Kidney (tissue), 22 donors: ENCODE measurements at regions of chr2 and their contacts with region 1.

Region 1: GRCh38 chr2:62456721-62457539 is 49.1 kb downstream of the TMEM17 start:
- DNase-seq: peak; percentile 74 to 92 (median 85)
- H3K4me3 ChIP-seq: peak overlapping the region; percentile 36 to 73 (median 59)
- H3K27ac ChIP-seq: peak overlapping the region; percentile 75 to 78
- H3K4me1 ChIP-seq: peaks cover 0 to 7% (median 3%) of the 10 kb centered on the region in 3 donors
- H3K27me3 ChIP-seq: no peaks in the 10 kb centered on the region
- CTCF ChIP-seq: peak; percentile 90

Region 2: DNA sequence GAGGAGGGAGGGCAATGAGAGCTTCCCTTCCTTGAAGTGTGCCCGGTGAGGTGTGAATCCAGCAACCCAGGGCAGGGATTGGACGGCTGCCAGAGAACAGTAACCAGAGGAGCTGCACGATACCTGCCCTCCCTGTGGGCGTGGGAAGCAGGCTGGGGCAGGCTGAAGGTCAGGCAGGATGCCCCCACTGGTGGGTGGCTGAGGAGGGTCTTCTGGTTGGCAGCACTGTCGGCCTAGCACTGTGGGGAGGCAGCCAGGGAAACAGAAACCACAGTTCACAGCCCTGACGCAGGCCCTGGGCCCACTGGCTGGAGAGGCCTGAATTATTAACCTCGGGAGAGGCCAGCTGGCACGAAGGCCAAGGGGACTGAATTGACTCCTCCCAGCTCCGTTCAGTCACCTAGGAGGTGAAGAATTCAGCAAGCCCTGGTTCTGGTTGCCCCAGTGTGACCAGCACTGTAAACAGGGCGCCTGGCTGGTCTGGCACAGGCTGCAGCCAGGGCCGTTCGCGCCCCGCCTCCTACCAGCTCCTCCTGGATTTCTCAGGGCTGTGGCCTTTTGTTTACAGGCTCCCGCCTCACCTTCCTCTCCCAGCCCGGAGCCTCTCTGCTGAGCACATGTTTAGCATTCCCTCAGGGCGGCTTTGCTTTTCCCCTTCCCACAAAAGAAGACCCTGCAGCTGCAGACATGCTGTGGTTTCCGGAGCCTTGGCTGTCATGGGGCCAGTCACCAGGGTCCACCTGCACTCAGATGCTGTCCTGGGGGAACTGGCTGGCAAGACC is 163.2 kb before region 1 on chr2:
- intact Hi-C with region 1: no loop called
- DNase-seq: peak; percentile 85 to 96 (median 94)
- H3K4me3 ChIP-seq: peak overlapping the region in 2 of 3 donors; percentile 9 to 37
- H3K27ac ChIP-seq: peak overlapping the region; percentile 88 to 92
- H3K4me1 ChIP-seq: peaks cover 0 to 30% (median 18%) of the 10 kb centered on the region in 3 donors
- H3K27me3 ChIP-seq: no peaks in the 10 kb centered on the region
- CTCF ChIP-seq: no peak

Region 3: DNA sequence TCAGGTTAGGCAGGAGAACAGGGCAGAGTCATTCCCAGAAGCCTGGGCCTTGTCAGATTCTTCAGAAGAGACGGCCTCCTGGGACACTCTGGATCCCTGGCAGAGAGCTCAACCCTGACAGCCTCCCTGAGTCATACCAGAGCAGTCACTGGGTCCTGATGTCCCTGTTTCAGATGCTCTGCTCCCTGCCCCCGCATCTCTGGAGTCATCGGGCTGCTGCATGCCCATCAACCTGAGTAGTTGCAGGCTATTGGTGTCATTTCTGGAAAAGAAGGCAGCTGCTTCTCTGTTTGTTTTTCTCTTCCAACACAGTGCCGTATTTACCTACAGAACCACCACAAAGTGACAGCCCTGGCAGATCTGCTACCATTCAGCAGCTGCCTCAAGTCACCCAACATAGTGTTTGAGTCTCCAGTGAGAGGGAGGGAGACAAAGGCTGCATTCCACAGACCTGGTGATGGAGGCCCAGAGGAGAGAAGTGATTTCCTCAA is 115.9 kb before region 1 on chr2:
- intact Hi-C with region 1: no loop called
- DNase-seq: peak; percentile 32 to 77 (median 54)
- H3K4me3 ChIP-seq: no peak overlapping the region
- H3K27ac ChIP-seq: no peak overlapping the region
- H3K4me1 ChIP-seq: no peaks in the 10 kb centered on the region
- H3K27me3 ChIP-seq: no peaks in the 10 kb centered on the region
- CTCF ChIP-seq: no peak

Region 4: DNA sequence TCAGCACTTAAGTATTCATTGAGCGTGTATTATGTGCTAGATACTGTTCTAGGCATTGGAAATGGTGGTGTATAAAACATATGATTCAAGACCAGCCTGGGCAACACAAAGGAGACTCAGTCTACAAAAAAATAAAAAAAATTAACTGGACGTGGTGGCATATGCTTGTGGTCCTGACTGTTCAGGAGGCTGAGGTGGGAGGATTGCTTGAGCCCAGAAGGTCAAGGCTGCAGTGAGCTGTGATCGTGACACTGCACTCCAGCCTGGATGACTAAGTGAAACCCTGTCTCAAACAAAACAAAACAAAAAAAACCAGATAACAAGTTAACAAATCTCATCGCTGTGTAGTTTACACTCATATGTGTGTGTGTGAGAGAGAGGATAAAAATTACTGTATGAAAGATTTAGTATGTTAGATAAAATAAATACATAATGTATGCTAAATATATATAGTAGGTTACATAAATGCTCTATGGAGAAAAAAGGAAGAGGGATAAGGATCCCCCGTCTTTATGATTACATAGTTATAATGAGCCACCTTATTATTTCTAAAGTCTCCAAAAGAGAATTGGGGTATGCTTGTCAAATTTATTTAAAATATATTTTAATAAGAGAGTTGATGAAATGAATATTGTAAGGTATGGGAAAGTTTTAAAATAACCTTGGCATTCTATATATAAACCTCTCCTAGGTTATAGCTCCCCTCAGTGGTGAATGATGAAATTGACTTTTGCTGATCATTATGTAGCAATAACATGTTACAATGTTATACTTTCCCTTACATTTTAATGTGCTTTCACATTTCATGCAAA is 317.8 kb after region 1 on chr2:
- intact Hi-C with region 1: loop called (anchors 5 kb)
- DNase-seq: peak in 2 of 5 donors; percentile 65 to 72
- H3K4me3 ChIP-seq: no peak overlapping the region
- H3K27ac ChIP-seq: no peak overlapping the region
- H3K4me1 ChIP-seq: no peaks in the 10 kb centered on the region
- H3K27me3 ChIP-seq: no peaks in the 10 kb centered on the region
- CTCF ChIP-seq: peak; percentile 70